PC-3 (cell line): ENCODE measurements at regions of chr6 and their contacts with region 1.

Region 1: DNA sequence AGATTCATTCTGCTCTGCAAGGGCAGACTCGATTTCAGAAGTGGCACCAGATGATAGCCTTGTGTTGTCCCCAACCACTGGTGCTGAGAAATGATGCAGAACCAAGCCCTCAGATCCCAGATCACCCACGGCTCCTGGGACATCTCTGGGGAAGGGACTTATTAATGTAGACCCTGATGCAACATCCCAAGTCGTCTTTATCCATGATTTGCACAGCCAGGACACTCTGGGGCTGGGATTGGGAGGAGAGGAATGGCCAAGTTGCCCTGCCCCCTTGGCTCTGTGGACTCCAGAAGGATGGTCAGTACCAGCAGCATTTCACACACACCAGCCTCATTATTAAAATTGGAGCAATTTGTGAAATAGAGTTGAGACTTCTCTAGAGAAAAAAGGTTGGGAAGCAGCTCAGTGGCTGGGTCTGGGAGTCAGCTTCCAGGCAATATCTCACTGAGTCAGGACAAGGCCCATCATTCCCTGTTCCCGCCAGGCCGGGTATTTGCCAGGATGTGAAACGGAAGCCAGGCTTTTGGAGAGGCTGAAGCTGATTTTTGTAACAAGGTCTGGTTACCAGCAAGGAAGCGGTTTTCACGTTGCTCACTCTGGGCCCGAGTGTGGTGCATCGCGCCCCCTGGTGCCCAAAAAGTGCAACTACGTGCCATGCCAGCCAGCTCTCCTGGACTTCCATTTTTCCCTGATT is 67.4 kb downstream of the ZBTB2 start:
- DNase-seq: peak; percentile 88
- ATAC-seq: peak; percentile 68
- H3K4me3 ChIP-seq: peak overlapping the region; percentile 89
- H3K27ac ChIP-seq: peak overlapping the region; percentile 87
- H3K4me1 ChIP-seq: peaks cover 27% of the 10 kb centered on the region
- H3K27me3 ChIP-seq: no peaks in the 10 kb centered on the region
- CTCF ChIP-seq: peak; percentile 85

Region 2: DNA sequence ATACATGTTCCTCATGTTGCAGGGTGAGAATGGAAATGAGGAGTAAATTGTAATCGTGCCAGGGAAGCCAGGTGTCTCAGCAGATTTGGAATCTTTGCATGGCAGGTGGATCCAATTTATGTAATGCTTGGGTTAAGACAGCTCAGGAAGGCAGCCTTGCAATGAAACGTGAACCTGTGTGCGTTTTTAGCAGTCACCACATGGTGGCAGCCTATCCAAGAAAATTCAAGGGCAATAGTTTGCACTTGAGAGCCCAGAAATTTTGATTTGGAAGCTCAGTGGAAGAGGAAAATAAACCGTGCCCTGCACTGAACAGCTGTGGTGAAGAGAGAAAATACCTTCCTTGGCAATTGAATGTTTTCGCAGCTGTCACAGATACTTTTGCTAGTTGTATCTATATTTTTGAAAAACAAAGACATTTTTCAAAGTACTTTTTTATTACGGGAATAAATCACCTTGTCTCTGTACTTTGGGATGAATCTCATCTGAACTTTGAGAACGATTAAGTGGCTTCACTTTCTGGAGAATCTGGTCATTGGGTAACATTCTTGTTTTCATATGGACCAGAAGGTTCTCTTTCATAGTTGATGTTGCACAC is 432.0 kb before region 1 on chr6:
- CTCF ChIA-PET with region 1: interaction called, 17 read pairs
- POLR2A ChIA-PET with region 1: no interaction called
- intact Hi-C with region 1: no loop called
- DNase-seq: peak; percentile 79
- ATAC-seq: peak; percentile 77
- H3K4me3 ChIP-seq: no peak overlapping the region
- H3K27ac ChIP-seq: 0 out of 2 replicates have a peak overlapping the region, but pooled peaks have one; percentile 17
- H3K4me1 ChIP-seq: peaks cover 13% of the 10 kb centered on the region
- H3K27me3 ChIP-seq: no peaks in the 10 kb centered on the region
- CTCF ChIP-seq: peak; percentile 79

Region 3: GRCh38 chr6:151060096-151060765 is 263.7 kb before region 1 on chr6:
- CTCF ChIA-PET with region 1: no interaction called
- POLR2A ChIA-PET with region 1: interaction called, 3 read pairs
- intact Hi-C with region 1: loop called (anchors 2 kb)
- DNase-seq: peak; percentile 97
- ATAC-seq: peak; percentile 86
- H3K4me3 ChIP-seq: no peak overlapping the region
- H3K27ac ChIP-seq: peak overlapping the region; percentile 100
- H3K4me1 ChIP-seq: peaks cover 50% of the 10 kb centered on the region
- H3K27me3 ChIP-seq: no peaks in the 10 kb centered on the region
- CTCF ChIP-seq: no peak

Region 4: DNA sequence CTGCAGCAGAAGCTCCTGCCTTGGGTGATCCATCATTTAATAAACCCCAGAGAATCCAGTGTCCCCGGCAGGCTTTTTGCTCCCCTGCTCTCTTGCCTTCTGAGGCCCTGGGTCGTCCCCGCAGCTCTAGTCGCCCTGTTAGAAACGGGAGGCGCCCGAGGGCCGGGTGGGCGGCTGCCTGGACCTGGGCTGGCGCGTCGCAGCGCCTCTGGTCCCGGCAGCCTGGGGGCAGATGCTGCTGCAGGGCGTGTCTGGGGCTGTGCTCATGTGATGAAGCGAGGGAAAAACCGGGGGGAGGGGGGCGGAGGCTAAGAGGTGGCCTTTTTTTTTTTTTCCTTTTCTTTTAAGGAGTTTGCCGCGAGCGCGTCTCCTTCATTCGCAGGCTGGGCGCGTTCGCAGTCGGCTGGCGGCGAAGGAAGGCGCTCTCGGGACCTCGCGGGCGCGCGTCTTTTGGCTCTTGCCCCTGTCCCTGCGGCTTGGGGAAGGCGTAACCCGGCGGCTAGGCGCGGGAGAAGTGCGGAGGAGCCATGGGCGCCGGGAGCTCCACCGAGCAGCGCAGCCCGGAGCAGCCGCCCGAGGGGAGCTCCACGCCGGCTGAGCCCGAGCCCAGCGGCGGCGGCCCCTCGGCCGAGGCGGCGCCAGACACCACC is 83.8 kb before region 1 on chr6:
- CTCF ChIA-PET with region 1: no interaction called
- POLR2A ChIA-PET with region 1: no interaction called
- intact Hi-C with region 1: loop called (anchors 10 kb)
- DNase-seq: peak; percentile 43
- ATAC-seq: peak; percentile 65
- H3K4me3 ChIP-seq: peak overlapping the region; percentile 92
- H3K27ac ChIP-seq: no peak overlapping the region
- H3K4me1 ChIP-seq: peaks cover 17% of the 10 kb centered on the region
- H3K27me3 ChIP-seq: no peaks in the 10 kb centered on the region
- CTCF ChIP-seq: no peak

Region 5: DNA sequence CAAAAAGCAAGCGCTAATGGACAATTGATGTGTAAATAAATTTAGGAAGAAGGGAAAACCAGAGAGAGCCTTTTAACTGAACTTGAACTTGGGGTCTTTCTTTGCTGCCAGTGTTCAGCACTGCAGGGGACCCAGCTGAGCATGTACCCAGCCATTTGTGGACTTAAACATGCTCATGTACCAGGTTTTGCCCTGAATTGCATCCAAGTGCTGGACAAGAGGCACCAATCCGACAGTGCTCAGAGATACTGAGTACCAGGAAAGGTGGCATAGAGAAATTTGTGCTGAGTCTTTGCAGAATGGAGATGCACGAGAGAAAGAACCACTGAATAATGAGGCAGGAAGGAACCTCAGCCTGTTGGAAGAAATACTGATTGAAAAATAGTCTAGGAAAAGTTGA is 68.1 kb before region 1 on chr6:
- CTCF ChIA-PET with region 1: no interaction called
- POLR2A ChIA-PET with region 1: no interaction called
- intact Hi-C with region 1: no loop called
- DNase-seq: no peak
- ATAC-seq: no peak
- H3K4me3 ChIP-seq: no peak overlapping the region
- H3K27ac ChIP-seq: no peak overlapping the region
- H3K4me1 ChIP-seq: no peaks in the 10 kb centered on the region; the same call in none of the 2 replicates
- H3K27me3 ChIP-seq: no peaks in the 10 kb centered on the region
- CTCF ChIP-seq: no peak

Region 6: DNA sequence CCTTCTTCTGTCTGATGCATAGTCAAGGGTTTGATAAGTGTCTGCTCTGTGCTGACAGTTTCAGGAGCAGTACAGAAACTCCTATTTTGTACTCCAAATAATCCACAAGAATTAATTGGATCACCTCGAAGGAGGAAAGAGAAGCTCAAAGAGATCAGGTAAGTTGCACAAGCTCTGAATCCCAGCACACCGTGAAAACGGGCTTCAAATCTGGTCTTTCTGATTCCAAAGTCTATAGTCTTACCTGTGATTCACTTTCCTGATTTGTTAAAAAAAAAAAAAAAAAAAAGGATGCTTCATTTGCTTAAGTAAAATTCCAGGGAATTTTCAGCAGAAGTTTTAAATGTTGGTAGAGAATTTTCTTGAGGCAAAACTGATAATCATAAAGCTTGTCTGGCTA is 327.7 kb after region 1 on chr6:
- CTCF ChIA-PET with region 1: interaction called, 13 read pairs
- POLR2A ChIA-PET with region 1: no interaction called
- intact Hi-C with region 1: no loop called
- DNase-seq: no peak
- ATAC-seq: no peak
- H3K4me3 ChIP-seq: no peak overlapping the region
- H3K27ac ChIP-seq: no peak overlapping the region
- H3K4me1 ChIP-seq: no peaks in the 10 kb centered on the region
- H3K27me3 ChIP-seq: no peaks in the 10 kb centered on the region
- CTCF ChIP-seq: no peak